ENCODE measurements at regions of chr10 and their contacts with region 1.

Region 1: DNA sequence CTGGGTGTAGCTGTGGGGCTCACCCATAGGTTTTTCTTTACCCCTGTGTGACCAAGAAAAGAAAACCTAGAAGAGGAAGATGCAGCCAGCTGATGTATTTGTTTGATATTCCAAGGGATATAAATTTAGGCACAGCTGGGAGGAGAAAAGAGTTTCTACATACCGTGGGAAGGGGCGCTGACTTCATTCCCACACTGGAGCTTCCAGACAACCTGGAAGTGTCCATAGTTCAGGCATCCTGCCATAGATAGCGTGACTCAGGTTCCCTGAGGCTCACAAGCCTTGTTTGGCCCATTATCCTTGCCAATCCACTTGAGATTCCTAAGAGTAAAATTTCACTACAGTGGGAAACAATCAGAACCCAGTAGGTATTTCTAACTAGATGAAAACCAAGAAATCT is 371.7 kb upstream of the NRP1 start:
- DNase-seq: no peak
- ATAC-seq: no peak
- H3K4me3 Mint-ChIP-seq: no peak overlapping the region
- H3K27ac Mint-ChIP-seq: no peak overlapping the region
- H3K4me1 Mint-ChIP-seq: no peaks in the 10 kb centered on the region
- H3K27me3 Mint-ChIP-seq: no peaks in the 10 kb centered on the region
- CTCF ChIP-seq: no peak

Region 2: GRCh38 chr10:33638891-33639290 is 67.3 kb before region 1 on chr10:
- CTCF ChIA-PET with region 1: no interaction called
- POLR2A ChIA-PET with region 1: no interaction called
- intact Hi-C with region 1: loop called (anchors 2 kb)
- DNase-seq: no peak
- ATAC-seq: no peak
- H3K4me3 Mint-ChIP-seq: no peak overlapping the region
- H3K27ac Mint-ChIP-seq: no peak overlapping the region
- H3K4me1 Mint-ChIP-seq: no peaks in the 10 kb centered on the region
- H3K27me3 Mint-ChIP-seq: no peaks in the 10 kb centered on the region
- CTCF ChIP-seq: no peak